Activated CD4-positive, alpha-beta T cell treated with anti-CD3 and anti-CD28 coated beads, Interleukin-2, amount 10 ng/mL, durations not matched to agents 7 days and 5 days (primary cell): ENCODE measurements at regions of chr1 and their contacts with region 1.

Region 1: GRCh38 chr1:31961536-31961935 is 23.4 kb upstream of the PTP4A2 start:
- DNase-seq: no peak
- H3K4me3 Mint-ChIP-seq: peak overlapping the region; percentile 32
- H3K27ac Mint-ChIP-seq: peak overlapping the region; percentile 88
- H3K4me1 Mint-ChIP-seq: peaks cover 69% of the 10 kb centered on the region
- H3K27me3 Mint-ChIP-seq: no peaks in the 10 kb centered on the region

Region 2: DNA sequence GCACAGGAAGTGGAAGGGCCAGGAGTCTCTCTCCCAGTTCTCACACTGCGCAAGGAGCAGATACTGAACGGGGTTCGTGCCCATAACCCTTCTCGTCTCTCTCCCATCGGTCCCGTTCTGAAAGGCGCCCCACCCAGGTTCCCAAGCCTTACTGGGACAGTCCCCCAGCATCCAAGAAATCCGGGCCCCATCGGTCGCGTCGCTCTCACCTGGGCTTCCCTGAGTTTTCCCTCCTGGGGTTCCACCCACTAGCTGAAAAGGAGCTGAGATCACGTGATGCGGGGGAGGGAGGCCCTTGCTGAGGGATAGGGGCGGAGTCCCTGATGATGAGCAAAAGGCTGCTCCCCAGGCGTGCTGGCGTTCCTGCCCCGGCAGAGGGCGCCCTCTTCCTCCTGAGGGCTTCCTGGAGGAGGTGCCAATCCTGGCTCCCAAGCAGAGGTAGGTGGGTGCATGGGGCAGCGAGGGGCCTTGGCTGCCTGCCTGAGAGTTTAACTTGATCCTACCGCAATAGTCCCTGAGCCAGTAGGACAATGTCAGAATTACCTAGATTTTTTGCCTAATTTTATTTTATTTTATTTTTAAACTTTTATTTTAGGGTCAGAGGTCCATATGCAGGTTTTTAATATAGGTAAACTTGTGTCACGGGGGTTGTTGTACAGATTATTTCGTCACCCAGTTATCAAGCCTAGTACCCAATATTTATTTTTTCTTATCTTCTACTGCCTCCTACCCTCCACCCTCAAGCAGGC is 145.6 kb before region 1 on chr1 and contains the start of gene SPOCD1:
- CTCF ChIA-PET with region 1: interaction called, 24 read pairs
- POLR2A ChIA-PET with region 1: no interaction called
- DNase-seq: peak; percentile 88
- H3K4me3 Mint-ChIP-seq: no peak within 1 kb of the TSS
- H3K27ac Mint-ChIP-seq: no peak within 1 kb of the TSS
- H3K4me1 Mint-ChIP-seq: peaks cover 14% of the 10 kb centered on the region
- H3K27me3 Mint-ChIP-seq: no peaks in the 10 kb centered on the region
- total RNA-seq, gene SPOCD1: 0.08 to 0.25 TPM